ENCODE measurements at regions of chr7 and their contacts with region 1.

Region 1: GRCh38 chr7:130010689-130011412 is 40.3 kb downstream of the ZC3HC1 start:
- DNase-seq: peak; percentile 87
- H3K4me3 ChIP-seq: no peak overlapping the region
- H3K27ac ChIP-seq: no peak overlapping the region
- H3K4me1 ChIP-seq: no peaks in the 10 kb centered on the region
- H3K27me3 ChIP-seq: no peaks in the 10 kb centered on the region
- CTCF ChIP-seq: peak; percentile 94

Region 2: DNA sequence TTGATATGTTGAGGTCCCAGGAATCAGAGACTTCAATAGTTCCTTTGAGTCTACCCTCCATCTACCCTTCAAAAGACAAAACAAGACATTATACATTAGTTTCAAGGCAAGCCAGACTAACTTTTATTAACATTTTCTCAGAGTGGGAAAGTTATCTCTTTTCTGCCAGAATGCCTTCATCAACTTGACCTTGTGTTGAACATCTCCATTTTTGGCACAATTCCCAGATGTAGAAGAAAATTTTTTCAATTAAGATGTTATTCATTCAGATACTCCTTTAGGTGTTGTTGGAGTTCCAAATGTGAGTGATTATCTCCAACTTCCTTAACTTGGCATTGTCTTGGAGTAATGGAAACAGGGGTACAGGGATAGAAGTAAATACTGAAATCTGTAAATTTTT is 340.2 kb before region 1 on chr7:
- intact Hi-C with region 1: loop called (anchors 10 kb)
- DNase-seq: no peak
- H3K4me3 ChIP-seq: no peak overlapping the region
- H3K27ac ChIP-seq: no peak overlapping the region
- H3K4me1 ChIP-seq: no peaks in the 10 kb centered on the region
- H3K27me3 ChIP-seq: no peaks in the 10 kb centered on the region
- CTCF ChIP-seq: no peak